ENCODE measurements at regions of chr11 and their contacts with region 1.

Region 1: DNA sequence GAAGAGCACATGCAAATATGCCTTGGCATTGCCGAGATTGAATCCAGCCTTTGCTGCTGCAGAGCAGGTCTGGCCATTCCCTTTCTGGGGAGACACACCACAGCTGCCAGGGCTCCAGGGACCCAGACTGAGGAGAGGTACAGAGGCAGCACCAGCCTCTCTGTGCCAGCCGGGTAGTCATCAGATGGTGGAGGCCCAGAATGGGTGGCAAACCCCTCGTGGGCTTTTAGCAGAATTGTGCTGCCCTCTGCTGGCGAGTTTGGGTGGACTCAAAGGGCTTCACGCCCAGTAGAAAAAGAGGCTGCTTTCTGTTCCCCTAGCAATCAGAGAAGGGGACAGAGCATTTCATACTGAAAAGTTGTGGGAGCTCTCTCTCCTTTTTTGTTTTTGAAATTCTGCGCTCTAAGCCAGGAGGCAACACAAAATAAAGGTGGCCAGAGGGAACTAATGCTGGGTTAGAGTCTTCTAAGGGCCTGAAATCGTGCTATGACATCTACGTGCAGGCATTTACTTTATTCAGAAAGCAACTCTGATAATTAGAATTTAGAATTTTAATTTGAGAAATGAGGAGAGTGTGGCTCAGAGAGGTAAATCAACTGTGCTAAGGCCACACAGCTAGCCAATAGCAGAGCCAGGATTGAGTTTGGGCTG is 158.8 kb upstream of the NAV2 start:
- DNase-seq: peak; percentile 70 to 92 (median 87)
- H3K4me3 ChIP-seq: no peak overlapping the region
- H3K27ac ChIP-seq: peak overlapping the region in 20 of 59 donors; percentile 0 to 75 (median 32)
- H3K27me3 ChIP-seq: peaks cover 0 to 9% (median 0%) of the 10 kb centered on the region in 45 donors
- CTCF ChIP-seq: peak; percentile 82 to 99 (median 97)

Region 2: DNA sequence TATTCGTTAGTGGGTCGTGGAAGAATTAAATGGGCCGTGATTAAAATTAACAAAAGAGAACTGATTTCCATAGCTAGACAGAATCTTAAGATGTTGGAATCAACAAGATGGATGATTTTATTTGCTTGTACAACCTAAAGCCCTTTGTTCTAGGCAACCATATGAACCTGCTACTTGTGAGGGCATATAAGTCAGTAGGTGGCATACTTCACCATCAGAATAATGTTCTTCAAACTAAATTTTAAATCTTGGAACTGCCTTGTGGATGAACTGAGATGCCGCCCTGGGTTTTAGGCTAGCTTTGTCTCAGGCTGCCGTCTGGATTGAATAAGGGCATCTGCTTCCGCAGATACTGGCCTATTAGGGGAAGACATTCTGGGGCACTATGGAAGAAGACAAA is 393.0 kb before region 1 on chr11:
- intact Hi-C with region 1: loop called in 1 of 2 experiments (anchors 10 kb)
- DNase-seq: no peak
- H3K4me3 ChIP-seq: no peak overlapping the region
- H3K27ac ChIP-seq: no peak overlapping the region
- H3K27me3 ChIP-seq: no peaks in the 10 kb centered on the region
- CTCF ChIP-seq: peak in 22 of 56 donors; percentile 12 to 50 (median 28)

Region 3: DNA sequence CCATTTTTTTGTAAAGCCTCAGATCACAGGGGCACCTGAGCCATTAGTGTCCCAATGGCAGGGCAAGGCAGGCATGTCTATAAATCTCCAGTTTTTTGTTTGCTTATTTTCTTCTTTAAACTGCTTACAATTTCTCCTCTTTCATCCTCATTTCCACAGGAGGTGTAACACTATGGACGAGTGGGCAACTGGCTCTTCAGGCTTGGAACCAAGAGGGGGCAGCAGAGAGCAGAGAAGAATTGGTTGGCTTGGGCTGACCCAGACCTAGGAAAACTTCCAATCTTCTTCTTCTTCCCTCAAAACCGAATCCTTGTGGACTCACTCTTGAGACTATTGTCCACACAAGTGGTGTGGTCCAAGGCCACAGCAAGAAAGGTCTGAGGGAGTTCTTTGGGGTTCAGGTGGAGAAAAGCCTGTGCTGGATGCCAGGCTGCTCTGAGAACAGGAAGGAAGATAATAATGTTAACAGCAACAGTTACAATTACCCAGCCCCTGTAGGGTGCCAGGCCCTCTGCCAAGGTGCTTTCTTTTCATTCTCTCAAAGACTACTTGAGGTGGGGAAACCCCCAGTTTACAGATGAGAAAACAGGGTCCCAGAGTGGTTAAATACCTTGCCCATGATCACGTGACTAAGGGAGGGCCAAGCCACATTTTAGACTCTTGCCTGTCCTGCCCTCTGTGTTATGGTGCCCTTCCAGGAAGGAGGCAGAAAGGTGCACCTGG is 242.3 kb before region 1 on chr11:
- intact Hi-C with region 1: loop called (anchors 1 kb)
- DNase-seq: peak in 9 of 10 donors; percentile 44 to 80 (median 72)
- H3K4me3 ChIP-seq: no peak overlapping the region
- H3K27ac ChIP-seq: no peak overlapping the region
- H3K27me3 ChIP-seq: peaks cover 0 to 14% (median 0%) of the 10 kb centered on the region in 45 donors
- CTCF ChIP-seq: peak; percentile 60 to 94 (median 87)

Region 4: GRCh38 chr11:19344751-19345518 is 208.9 kb before region 1 on chr11:
- intact Hi-C with region 1: loop called in 1 of 2 experiments (anchors 1 kb)
- DNase-seq: peak; percentile 49 to 86 (median 75)
- H3K4me3 ChIP-seq: peak overlapping the region; percentile 52 to 93 (median 74)
- H3K27ac ChIP-seq: peak overlapping the region in 20 of 59 donors; percentile 2 to 75 (median 30)
- H3K27me3 ChIP-seq: no peaks in the 10 kb centered on the region
- CTCF ChIP-seq: peak in 2 of 56 donors; percentile 3 to 5

Region 5: GRCh38 chr11:19820100-19820499 is 266.3 kb after region 1 on chr11:
- intact Hi-C with region 1: no loop called
- DNase-seq: no peak
- H3K4me3 ChIP-seq: no peak overlapping the region
- H3K27ac ChIP-seq: no peak overlapping the region
- H3K27me3 ChIP-seq: no peaks in the 10 kb centered on the region
- CTCF ChIP-seq: no peak

Region 6: DNA sequence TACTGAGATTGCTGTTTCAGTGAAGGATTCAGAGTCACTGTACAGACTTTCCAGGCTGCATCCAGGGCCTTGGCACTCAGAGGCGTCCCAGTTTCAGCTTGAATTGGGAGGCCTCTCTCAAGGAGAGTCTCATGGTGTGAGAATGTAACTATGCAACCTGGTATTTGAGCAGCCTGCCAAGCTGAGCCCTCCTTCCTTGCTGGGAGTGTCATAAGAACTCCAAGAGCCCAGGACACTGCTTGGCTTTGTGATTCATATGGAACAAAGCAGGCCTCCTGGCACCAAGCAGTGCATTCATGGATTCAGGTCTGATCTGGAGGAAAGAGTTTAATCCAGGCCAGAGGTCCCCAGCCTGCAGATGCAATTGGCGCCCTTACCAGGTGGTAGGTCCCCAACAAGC is 434.8 kb after region 1 on chr11:
- intact Hi-C with region 1: no loop called
- DNase-seq: peak in 7 of 10 donors; percentile 12 to 70 (median 56)
- H3K4me3 ChIP-seq: no peak overlapping the region
- H3K27ac ChIP-seq: peak overlapping the region in 20 of 59 donors; percentile 10 to 80 (median 46)
- H3K27me3 ChIP-seq: no peaks in the 10 kb centered on the region
- CTCF ChIP-seq: no peak

Region 7: GRCh38 chr11:20110908-20111669 is 557.3 kb after region 1 on chr11:
- intact Hi-C with region 1: loop called in 1 of 2 experiments (anchors 5 kb)
- DNase-seq: peak in 3 of 10 donors; percentile 35 to 47 (median 44)
- H3K4me3 ChIP-seq: no peak overlapping the region
- H3K27ac ChIP-seq: peak overlapping the region in 43 of 59 donors; percentile 1 to 87 (median 76)
- H3K27me3 ChIP-seq: no peaks in the 10 kb centered on the region
- CTCF ChIP-seq: peak; percentile 60 to 88 (median 82)